CD8-positive, alpha-beta T cell (primary cell): ENCODE measurements at regions of chr12 and their contacts with region 1.

Region 1: DNA sequence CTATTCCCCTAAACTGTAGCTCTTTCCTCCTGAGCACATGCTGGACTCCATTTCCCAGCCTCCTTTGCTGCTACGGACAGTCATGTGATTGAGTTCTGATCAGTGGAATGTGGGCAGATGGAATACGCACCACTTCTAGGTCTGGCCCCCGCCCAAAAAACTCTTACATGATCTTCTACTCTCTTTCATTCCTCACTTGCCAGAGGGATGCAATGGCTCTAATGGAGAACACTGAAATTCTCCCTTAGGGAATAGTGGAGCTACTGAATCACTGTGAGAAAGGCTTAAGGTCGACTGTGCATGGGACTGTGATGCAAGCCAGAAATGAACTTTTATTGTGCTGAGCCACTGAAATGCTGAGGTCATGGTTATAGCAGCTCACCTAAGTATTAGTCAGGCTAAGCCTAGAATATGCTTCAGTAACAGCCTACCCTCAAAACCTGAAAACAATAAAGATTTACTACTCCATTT is 13.0 kb upstream of the TMED2 start:
- DNase-seq: no peak
- ATAC-seq: no peak
- H3K4me3 ChIP-seq: no peak overlapping the region
- H3K4me3 Mint-ChIP-seq: no peak overlapping the region
- H3K27ac ChIP-seq: no peak overlapping the region
- H3K27ac Mint-ChIP-seq: no peak overlapping the region
- H3K4me1 ChIP-seq: no peaks in the 10 kb centered on the region
- H3K4me1 Mint-ChIP-seq: peaks cover 4% of the 10 kb centered on the region
- H3K27me3 ChIP-seq: peaks cover 0 to 2% of the 10 kb centered on the region in 2 experiments
- H3K27me3 Mint-ChIP-seq: peaks cover 11% of the 10 kb centered on the region
- CTCF ChIP-seq: no peak

Region 2: GRCh38 chr12:123019841-123020138 is 551.6 kb before region 1 on chr12:
- CTCF ChIA-PET with region 1: no interaction called
- POLR2A ChIA-PET with region 1: no interaction called
- intact Hi-C with region 1: loop called in 1 of 2 experiments (anchors 10 kb)
- DNase-seq: no peak
- ATAC-seq: no peak
- H3K4me3 ChIP-seq: no peak overlapping the region
- H3K4me3 Mint-ChIP-seq: no peak overlapping the region
- H3K27ac ChIP-seq: no peak overlapping the region
- H3K27ac Mint-ChIP-seq: no peak overlapping the region
- H3K4me1 ChIP-seq: peaks cover under 1% of the 10 kb centered on the region
- H3K4me1 Mint-ChIP-seq: peaks cover 19% of the 10 kb centered on the region
- H3K27me3 ChIP-seq: no peaks in the 10 kb centered on the region
- H3K27me3 Mint-ChIP-seq: no peaks in the 10 kb centered on the region
- CTCF ChIP-seq: no peak